ENCODE measurements at regions of chr3 and their contacts with region 1.

Region 1: DNA sequence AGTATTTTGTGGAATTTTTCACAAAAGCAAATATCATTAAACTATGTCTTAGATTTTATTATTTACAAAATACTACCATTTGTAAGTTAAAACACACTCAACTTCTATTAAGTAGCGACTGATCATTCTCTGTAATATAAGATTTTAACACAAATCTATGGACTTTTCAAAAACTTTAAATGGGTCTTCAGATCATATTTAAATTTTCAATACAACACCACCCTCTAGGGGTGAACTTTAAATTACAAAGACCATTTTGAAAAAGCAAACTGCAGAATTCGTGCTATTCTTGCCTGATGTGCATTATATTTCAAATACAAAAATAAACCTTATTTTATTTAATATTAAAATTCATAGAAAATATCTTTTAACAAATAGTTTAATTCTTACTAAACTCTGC is 8.2 kb upstream of the VGLL4 start:
- DNase-seq: no peak
- H3K4me3 Mint-ChIP-seq: no peak overlapping the region
- H3K27ac Mint-ChIP-seq: no peak overlapping the region
- H3K4me1 Mint-ChIP-seq: peaks cover 2% of the 10 kb centered on the region
- H3K27me3 Mint-ChIP-seq: no peaks in the 10 kb centered on the region

Region 2: DNA sequence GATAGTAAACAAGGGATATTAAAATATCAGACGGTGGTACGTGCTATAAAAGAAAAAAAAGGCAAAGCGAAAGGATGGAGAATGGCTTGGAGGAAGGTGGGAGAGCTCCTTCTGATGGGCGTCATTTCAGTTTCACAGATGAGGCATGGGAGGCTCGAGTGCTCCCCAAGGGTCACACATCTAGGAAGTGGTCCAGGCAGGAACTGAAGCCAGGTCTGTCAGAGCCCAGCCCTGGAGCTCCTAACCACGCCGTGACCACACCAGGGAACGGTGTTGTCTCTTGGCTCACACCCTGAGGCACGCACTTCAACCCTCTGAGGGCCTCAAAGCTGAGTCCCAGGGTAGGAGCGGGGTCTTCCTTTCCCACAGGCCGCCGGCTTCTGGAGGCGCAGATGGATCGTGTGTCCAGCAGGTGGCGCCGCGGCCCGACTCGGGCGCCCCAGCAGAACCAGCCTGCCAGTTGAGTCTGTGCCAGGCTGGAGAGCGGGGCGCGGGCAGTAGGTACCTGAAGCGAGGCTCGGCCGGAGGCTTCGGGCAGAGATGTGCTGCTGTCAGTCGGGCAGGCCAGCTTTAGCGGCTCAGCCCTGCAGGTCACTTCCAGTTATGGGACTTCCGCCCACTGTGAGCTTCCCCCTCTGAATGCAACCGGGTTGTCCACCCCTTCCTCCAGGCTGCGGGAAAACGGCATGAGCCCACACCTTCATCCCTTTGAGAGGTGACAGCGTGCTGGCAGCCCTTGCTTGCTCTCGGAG is 591.2 kb before region 1 on chr3:
- CTCF ChIA-PET with region 1: interaction called, 6 read pairs
- POLR2A ChIA-PET with region 1: no interaction called
- intact Hi-C with region 1: loop called (anchors 5 kb)
- DNase-seq: peak; percentile 61
- H3K4me3 Mint-ChIP-seq: no peak overlapping the region
- H3K27ac Mint-ChIP-seq: no peak overlapping the region
- H3K4me1 Mint-ChIP-seq: no peaks in the 10 kb centered on the region
- H3K27me3 Mint-ChIP-seq: peaks cover 6% of the 10 kb centered on the region

Region 3: GRCh38 chr3:11379233-11379823 is 272.6 kb before region 1 on chr3:
- CTCF ChIA-PET with region 1: interaction called, 56 read pairs
- POLR2A ChIA-PET with region 1: no interaction called
- intact Hi-C with region 1: loop called (anchors 2 kb)
- DNase-seq: no peak
- H3K4me3 Mint-ChIP-seq: no peak overlapping the region
- H3K27ac Mint-ChIP-seq: no peak overlapping the region
- H3K4me1 Mint-ChIP-seq: no peaks in the 10 kb centered on the region
- H3K27me3 Mint-ChIP-seq: no peaks in the 10 kb centered on the region

Region 4: GRCh38 chr3:11392014-11392859 is 259.7 kb before region 1 on chr3:
- CTCF ChIA-PET with region 1: interaction called, 11 read pairs
- POLR2A ChIA-PET with region 1: no interaction called
- intact Hi-C with region 1: no loop called
- DNase-seq: no peak
- H3K4me3 Mint-ChIP-seq: no peak overlapping the region
- H3K27ac Mint-ChIP-seq: no peak overlapping the region
- H3K4me1 Mint-ChIP-seq: peaks cover 30% of the 10 kb centered on the region
- H3K27me3 Mint-ChIP-seq: no peaks in the 10 kb centered on the region

Region 5: DNA sequence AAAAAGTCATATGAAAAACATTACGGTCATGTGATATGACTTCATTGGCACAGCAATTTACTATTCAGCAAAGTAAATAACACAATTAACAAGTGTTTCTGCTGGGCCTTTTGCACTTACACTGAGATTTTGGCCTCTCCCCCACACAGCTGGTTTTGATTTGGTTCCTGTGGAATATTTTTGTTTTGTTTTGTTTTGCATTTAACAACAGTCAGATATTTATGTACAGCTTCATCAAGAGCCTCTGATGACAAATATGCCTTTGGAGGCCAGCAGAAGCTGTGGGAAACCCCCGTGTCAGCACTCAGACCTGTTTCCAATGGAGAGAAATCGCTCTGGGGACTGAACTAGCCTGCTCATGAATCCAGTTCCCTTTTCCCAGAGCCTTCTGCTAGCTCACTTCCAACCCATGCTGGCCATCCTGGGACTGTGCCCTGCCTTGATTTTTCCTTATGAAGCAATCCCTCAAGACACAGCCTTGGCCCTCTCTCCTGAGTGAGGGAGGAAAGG is 217.8 kb before region 1 on chr3:
- CTCF ChIA-PET with region 1: no interaction called
- POLR2A ChIA-PET with region 1: no interaction called
- intact Hi-C with region 1: no loop called
- DNase-seq: no peak
- H3K4me3 Mint-ChIP-seq: no peak overlapping the region
- H3K27ac Mint-ChIP-seq: no peak overlapping the region
- H3K4me1 Mint-ChIP-seq: no peaks in the 10 kb centered on the region
- H3K27me3 Mint-ChIP-seq: no peaks in the 10 kb centered on the region

Region 6: GRCh38 chr3:11539677-11540076 is 112.2 kb before region 1 on chr3:
- CTCF ChIA-PET with region 1: no interaction called
- POLR2A ChIA-PET with region 1: no interaction called
- intact Hi-C with region 1: no loop called
- DNase-seq: no peak
- H3K4me3 Mint-ChIP-seq: no peak overlapping the region
- H3K27ac Mint-ChIP-seq: no peak overlapping the region
- H3K4me1 Mint-ChIP-seq: no peaks in the 10 kb centered on the region
- H3K27me3 Mint-ChIP-seq: no peaks in the 10 kb centered on the region

Region 7: DNA sequence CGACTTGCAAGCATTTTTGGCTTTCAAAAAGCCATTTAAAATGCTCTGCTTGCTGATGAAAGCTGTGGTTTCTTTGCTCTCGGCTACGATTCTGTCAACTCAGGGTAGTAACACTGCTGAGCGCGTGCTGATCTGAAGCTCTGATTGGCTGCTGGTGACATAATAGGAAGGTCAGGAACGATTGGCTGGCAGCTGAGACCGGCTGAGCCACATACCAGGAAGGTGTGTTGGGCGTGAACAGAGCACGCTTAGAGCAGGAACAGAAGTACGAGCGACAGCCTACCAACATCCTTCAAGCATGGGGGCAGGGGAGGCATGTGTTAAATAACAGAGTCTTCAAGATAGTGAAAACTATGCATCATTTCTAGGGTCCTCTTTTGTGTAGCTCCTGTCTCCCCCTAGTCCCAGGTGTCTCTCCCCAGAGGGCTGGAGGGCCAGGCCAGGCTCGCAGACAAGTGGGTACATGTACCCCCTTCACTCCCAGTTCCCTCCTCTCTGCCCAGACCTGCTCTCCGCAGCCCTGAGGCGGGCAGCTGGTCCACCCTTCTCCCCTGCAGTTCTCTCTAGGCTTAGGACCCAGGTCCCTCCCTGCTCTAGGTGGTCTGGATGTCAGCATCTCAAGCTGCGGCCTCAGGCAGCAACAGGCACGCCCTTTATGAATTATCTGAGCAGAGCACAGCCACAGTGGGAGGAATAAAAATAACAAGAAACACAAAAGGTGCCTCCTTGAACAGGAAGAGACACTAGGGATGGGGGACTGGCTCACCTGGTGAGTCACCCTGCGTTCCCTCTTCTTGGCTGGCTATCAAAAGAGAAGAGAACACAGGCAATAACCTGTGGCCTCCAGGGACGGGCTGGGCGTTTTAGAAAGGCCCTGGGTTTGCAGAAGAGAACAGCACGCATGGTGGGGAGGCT is 118.8 kb after region 1 on chr3:
- CTCF ChIA-PET with region 1: no interaction called
- POLR2A ChIA-PET with region 1: no interaction called
- intact Hi-C with region 1: no loop called
- DNase-seq: peak; percentile 88
- H3K4me3 Mint-ChIP-seq: no peak overlapping the region
- H3K27ac Mint-ChIP-seq: peak overlapping the region; percentile 47
- H3K4me1 Mint-ChIP-seq: peaks cover 20% of the 10 kb centered on the region
- H3K27me3 Mint-ChIP-seq: no peaks in the 10 kb centered on the region

Region 8: GRCh38 chr3:11803977-11804892 is 152.3 kb after region 1 on chr3:
- CTCF ChIA-PET with region 1: interaction called, 10 read pairs
- POLR2A ChIA-PET with region 1: no interaction called
- intact Hi-C with region 1: loop called (anchors 1 kb)
- DNase-seq: peak; percentile 42
- H3K4me3 Mint-ChIP-seq: no peak overlapping the region
- H3K27ac Mint-ChIP-seq: no peak overlapping the region
- H3K4me1 Mint-ChIP-seq: peaks cover 2% of the 10 kb centered on the region
- H3K27me3 Mint-ChIP-seq: no peaks in the 10 kb centered on the region